H1 (cell line): ENCODE measurements at regions of chr16 and their contacts with region 1.

Region 1: DNA sequence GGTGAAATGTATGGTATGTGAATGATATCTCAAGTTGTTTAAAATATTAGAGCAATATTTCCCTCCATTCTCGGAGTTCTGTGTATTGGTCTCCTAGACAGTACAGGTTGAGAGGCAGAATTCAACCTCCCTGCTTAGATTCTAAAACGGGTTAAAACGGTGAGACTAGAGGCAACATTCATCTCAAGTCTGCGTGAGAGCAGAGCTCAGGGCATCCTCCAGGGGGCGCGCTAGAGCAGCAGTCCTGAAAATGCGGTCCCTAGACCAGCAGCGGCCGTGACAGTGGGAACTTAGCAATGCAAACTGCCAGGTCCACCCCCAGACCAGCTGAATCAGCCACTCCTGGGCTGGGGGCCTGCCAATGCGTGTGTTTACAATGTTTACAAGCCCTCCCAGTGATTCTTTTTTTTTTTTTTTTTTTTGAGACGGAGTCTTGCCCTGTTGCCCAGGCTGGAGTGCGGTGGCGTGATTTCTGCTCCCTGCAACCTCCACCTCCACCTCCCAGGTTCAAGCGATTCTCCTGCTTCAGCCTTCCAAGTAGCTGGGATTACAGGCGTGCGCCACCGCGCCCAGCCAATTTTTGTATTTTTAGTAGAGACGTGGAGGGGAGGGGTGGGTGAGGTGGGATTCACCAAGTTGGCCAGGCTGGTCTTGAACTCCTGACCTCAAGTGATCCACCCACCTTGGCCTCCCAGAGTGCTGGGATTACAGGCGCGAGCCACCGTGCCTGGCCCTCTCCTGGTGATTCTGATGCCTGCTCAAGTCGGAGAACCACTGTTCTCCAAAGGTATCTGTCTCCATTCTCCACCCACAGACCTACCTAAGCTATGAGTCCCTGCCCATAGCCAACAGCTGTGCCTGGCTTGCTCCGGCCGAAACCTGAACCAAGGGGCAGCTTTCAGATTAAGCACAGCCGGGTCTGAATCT is 24.2 kb downstream of the KLHL36 start:
- DNase-seq: peak; percentile 57 to 96
- H3K4me3 ChIP-seq: no peak overlapping the region
- H3K27ac ChIP-seq: no peak overlapping the region
- H3K4me1 ChIP-seq: peaks cover 0 to 13% (median 6%) of the 10 kb centered on the region in 4 experiments; a peak in 5 of 7 replicates
- H3K27me3 ChIP-seq: no peaks in the 10 kb centered on the region
- CTCF ChIP-seq: peak; percentile 92 to 95 (median 95)
- EP300 ChIP-seq: no peak
- POLR2A ChIP-seq: no peak
- RAD21 ChIP-seq: peak; percentile 65 to 76

Region 2: DNA sequence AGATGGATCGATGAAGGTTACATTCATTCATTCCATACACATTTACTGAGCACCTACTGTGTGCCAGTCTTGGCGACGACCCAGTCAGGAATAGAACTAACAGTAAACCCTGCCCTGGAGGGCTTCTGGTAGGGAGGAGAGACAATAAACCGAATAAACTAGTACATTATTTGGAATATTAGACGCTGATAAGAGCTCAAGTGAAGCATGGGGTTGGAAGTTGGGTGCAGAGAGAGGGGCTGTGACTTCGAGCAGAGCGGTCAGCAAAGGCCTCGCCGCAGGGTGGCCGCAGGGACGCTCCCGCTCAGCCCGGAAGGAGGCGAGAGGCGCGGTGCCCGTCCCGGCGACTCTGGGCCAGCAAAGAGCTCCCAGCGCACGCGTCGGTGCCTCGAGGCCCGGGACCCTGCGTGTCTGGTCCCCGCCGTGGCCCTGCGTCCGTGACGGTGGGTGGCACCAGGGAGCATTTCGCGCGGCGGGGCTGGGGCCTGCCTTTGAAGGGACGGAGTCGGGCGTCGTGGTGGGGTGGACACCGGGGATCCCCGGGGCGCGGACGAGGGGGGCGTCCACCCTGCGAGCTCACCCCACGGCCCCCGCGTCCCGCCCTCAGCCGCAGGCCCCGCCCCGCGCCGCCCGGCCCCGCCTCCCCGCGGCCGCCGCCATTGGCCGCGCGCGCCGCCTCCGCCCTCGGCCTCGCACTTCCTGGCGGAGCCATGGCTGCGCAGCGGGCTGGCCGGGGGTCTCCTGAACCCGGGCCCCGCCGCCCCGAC is 24.5 kb before region 1 on chr16 and contains the start of gene KLHL36:
- CTCF ChIA-PET with region 1: interaction called, 20 read pairs
- POLR2A ChIA-PET with region 1: no interaction called
- DNase-seq: peak in 1 of 2 experiments; percentile 69
- H3K4me3 ChIP-seq: peak within 1 kb of the TSS; percentile 55 to 71 (median 62)
- H3K27ac ChIP-seq: no peak within 1 kb of the TSS
- H3K4me1 ChIP-seq: peaks cover 0 to 4% (median 2%) of the 10 kb centered on the region in 4 experiments; a peak in 4 of 7 replicates
- H3K27me3 ChIP-seq: peaks cover 0 to 13% (median 9%) of the 10 kb centered on the region in 4 experiments; a peak in 4 of 7 replicates
- CTCF ChIP-seq: no peak
- EP300 ChIP-seq: no peak
- POLR2A ChIP-seq: no peak
- RAD21 ChIP-seq: no peak
- total RNA-seq, gene KLHL36: 33.6 and 35.3 TPM in 2 replicates

Region 3: GRCh38 chr16:84687715-84688114 is 15.2 kb after region 1 on chr16:
- CTCF ChIA-PET with region 1: interaction called, 27 read pairs
- POLR2A ChIA-PET with region 1: no interaction called
- DNase-seq: no peak
- H3K4me3 ChIP-seq: no peak overlapping the region
- H3K27ac ChIP-seq: no peak overlapping the region
- H3K4me1 ChIP-seq: peaks cover 0 to 12% (median 6%) of the 10 kb centered on the region in 4 experiments; a peak in 5 of 7 replicates
- H3K27me3 ChIP-seq: no peaks in the 10 kb centered on the region; a peak in 1 of 7 replicates
- CTCF ChIP-seq: no peak
- EP300 ChIP-seq: no peak
- POLR2A ChIP-seq: no peak
- RAD21 ChIP-seq: no peak

Region 4: DNA sequence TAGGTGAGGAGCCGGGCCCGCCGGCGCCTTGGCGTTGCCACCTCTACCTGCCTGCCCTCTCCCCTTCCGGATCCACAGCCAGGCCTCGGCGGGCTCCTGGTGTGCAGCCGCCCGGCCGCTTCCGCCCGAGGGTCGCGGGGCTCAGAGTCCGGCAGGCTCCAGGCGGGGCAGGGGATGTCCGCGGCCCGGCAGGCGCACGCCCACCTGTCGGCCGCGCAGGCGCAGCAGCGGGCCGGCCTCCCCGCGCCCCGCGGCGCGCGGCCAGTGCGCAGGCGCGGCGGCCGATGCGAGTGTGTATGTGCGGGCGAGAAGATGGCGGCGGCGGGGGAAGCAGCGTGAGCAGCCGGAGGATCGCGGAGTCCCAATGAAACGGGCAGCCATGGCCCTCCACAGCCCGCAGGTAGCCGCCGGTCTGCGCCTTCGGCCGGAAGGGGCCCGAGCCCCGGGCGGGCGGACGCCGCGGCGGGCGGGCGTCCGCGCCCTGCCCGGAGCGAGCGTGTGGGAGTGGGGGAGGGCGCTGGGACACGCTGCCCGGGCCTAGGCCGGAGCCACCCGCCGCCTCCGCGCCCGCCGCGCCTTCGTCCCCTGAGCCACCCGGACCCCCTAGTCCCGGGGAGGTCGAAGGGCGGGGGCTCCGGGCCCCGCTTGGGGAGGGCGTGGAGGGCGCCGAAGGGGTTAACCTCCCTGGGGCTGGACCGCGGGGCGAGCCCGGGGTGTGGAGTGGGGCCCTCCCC is 27.3 kb after region 1 on chr16 and contains the start of gene USP10:
- CTCF ChIA-PET with region 1: interaction called, 19 read pairs
- POLR2A ChIA-PET with region 1: interaction called, 6 read pairs
- DNase-seq: peak; percentile 71 to 88
- H3K4me3 ChIP-seq: peak within 1 kb of the TSS; percentile 84 to 99 (median 88)
- H3K27ac ChIP-seq: peak within 1 kb of the TSS; percentile 92
- H3K4me1 ChIP-seq: peaks cover 0 to 9% (median 7%) of the 10 kb centered on the region in 4 experiments; a peak in 5 of 7 replicates
- H3K27me3 ChIP-seq: no peaks in the 10 kb centered on the region
- CTCF ChIP-seq: no peak
- EP300 ChIP-seq: 0 out of 3 replicates have a peak, but pooled peaks of 1 of the 2 experiments have one; percentile 34
- POLR2A ChIP-seq: peak; percentile 67 to 82; a peak in 2 of 3 replicates
- RAD21 ChIP-seq: no peak
- total RNA-seq, gene USP10: 186 and 195 TPM in 2 replicates

Region 5: GRCh38 chr16:84714028-84714427 is 41.5 kb after region 1 on chr16:
- CTCF ChIA-PET with region 1: interaction called, 29 read pairs
- POLR2A ChIA-PET with region 1: no interaction called
- DNase-seq: peak in 1 of 2 experiments; percentile 50
- H3K4me3 ChIP-seq: no peak overlapping the region
- H3K27ac ChIP-seq: no peak overlapping the region
- H3K4me1 ChIP-seq: peaks cover 2 to 24% (median 19%) of the 10 kb centered on the region in 4 experiments
- H3K27me3 ChIP-seq: no peaks in the 10 kb centered on the region
- CTCF ChIP-seq: no peak
- EP300 ChIP-seq: no peak
- POLR2A ChIP-seq: no peak
- RAD21 ChIP-seq: no peak

Region 6: GRCh38 chr16:84720177-84720579 is 47.6 kb after region 1 on chr16:
- CTCF ChIA-PET with region 1: interaction called, 98 read pairs
- POLR2A ChIA-PET with region 1: no interaction called
- DNase-seq: peak in 1 of 2 experiments; percentile 22
- H3K4me3 ChIP-seq: no peak overlapping the region
- H3K27ac ChIP-seq: no peak overlapping the region
- H3K4me1 ChIP-seq: peaks cover 0 to 10% (median 4%) of the 10 kb centered on the region in 4 experiments; a peak in 6 of 7 replicates
- H3K27me3 ChIP-seq: no peaks in the 10 kb centered on the region
- CTCF ChIP-seq: no peak
- EP300 ChIP-seq: no peak
- POLR2A ChIP-seq: no peak
- RAD21 ChIP-seq: no peak

Region 7: GRCh38 chr16:84754353-84754856 is 81.9 kb after region 1 on chr16:
- CTCF ChIA-PET with region 1: interaction called, 10 read pairs
- POLR2A ChIA-PET with region 1: interaction called, 3 read pairs
- DNase-seq: peak; percentile 33 to 76
- H3K4me3 ChIP-seq: no peak overlapping the region
- H3K27ac ChIP-seq: no peak overlapping the region
- H3K4me1 ChIP-seq: no peaks in the 10 kb centered on the region
- H3K27me3 ChIP-seq: no peaks in the 10 kb centered on the region
- CTCF ChIP-seq: peak in 2 of 3 experiments; percentile 73 to 79; a peak in 3 of 4 replicates
- EP300 ChIP-seq: no peak
- POLR2A ChIP-seq: no peak
- RAD21 ChIP-seq: peak; percentile 79 to 82

Region 8: DNA sequence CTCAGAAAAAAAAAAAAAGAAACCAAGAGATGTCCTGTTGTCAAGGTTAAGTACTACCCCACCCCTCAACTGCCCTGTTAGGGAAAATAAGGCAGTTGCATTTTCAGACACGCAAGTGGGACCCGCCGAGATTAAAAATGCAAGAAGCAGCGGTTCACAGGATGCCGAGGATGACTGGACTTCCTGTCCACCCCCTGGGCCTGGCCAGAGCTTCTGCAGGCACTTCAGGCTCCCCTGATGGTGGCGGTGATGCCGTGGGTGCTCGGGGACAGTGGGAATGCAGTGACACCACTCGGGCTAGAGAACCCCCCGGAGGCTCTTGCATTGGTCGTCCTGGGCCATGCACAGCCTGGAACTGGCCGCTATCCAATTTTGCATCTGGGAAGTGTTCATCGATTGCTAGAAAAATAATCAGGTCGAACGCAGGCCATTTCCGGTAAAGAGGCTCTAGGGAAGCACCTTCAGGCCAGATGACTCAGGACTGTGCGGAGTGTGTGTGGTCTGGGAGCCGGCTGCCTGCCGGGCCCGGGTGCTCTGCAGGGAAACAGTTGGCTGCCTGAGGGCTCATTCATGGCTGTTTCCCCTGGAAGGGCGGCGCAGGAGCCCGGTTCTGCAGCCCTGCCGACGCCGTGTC is 133.8 kb after region 1 on chr16:
- CTCF ChIA-PET with region 1: no interaction called
- POLR2A ChIA-PET with region 1: no interaction called
- DNase-seq: no peak
- H3K4me3 ChIP-seq: no peak overlapping the region
- H3K27ac ChIP-seq: no peak overlapping the region
- H3K4me1 ChIP-seq: no peaks in the 10 kb centered on the region
- H3K27me3 ChIP-seq: no peaks in the 10 kb centered on the region; a peak in 1 of 7 replicates
- CTCF ChIP-seq: no peak
- EP300 ChIP-seq: no peak
- POLR2A ChIP-seq: no peak
- RAD21 ChIP-seq: no peak